CD4-positive, alpha-beta memory T cell (primary cell): ENCODE measurements at regions of chr3 and their contacts with region 1.

Region 1: GRCh38 chr3:142808103-142808917 is 80.6 kb downstream of the PCOLCE2 start:
- DNase-seq: no peak
- H3K4me3 ChIP-seq: no peak overlapping the region
- H3K4me3 Mint-ChIP-seq: no peak overlapping the region
- H3K27ac ChIP-seq: no peak overlapping the region
- H3K27ac Mint-ChIP-seq: no peak overlapping the region
- H3K4me1 ChIP-seq: no peaks in the 10 kb centered on the region
- H3K4me1 Mint-ChIP-seq: no peaks in the 10 kb centered on the region
- H3K27me3 ChIP-seq: no peaks in the 10 kb centered on the region
- H3K27me3 Mint-ChIP-seq: peaks cover 3 to 9% of the 10 kb centered on the region in 2 donors

Region 2: DNA sequence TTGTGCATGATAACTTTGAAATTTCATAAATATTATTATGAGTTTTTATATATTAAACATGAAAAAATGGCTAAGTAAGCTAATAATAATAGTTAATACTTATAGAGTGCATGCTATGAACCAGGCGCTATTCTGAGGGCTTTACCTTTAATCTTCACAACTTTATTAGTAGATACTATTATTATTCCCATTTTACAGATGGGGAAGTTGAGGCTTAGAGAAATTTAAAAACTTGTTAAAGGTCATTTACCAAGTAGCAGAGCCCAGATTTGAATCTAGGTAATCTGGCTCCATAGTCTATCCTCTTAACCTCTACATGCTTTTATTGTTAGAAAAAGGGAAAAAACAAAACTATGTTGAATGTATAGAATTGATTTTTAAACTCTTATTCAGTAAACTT is 24.1 kb before region 1 on chr3:
- CTCF ChIA-PET with region 1: no interaction called
- POLR2A ChIA-PET with region 1: no interaction called
- intact Hi-C with region 1: loop called (anchors 1 kb)
- DNase-seq: no peak
- H3K4me3 ChIP-seq: no peak overlapping the region
- H3K4me3 Mint-ChIP-seq: no peak overlapping the region
- H3K27ac ChIP-seq: no peak overlapping the region
- H3K27ac Mint-ChIP-seq: no peak overlapping the region
- H3K4me1 ChIP-seq: no peaks in the 10 kb centered on the region
- H3K4me1 Mint-ChIP-seq: no peaks in the 10 kb centered on the region
- H3K27me3 ChIP-seq: no peaks in the 10 kb centered on the region
- H3K27me3 Mint-ChIP-seq: no peaks in the 10 kb centered on the region